ENCODE measurements at regions of chr18 and their contacts with region 1.

Region 1: DNA sequence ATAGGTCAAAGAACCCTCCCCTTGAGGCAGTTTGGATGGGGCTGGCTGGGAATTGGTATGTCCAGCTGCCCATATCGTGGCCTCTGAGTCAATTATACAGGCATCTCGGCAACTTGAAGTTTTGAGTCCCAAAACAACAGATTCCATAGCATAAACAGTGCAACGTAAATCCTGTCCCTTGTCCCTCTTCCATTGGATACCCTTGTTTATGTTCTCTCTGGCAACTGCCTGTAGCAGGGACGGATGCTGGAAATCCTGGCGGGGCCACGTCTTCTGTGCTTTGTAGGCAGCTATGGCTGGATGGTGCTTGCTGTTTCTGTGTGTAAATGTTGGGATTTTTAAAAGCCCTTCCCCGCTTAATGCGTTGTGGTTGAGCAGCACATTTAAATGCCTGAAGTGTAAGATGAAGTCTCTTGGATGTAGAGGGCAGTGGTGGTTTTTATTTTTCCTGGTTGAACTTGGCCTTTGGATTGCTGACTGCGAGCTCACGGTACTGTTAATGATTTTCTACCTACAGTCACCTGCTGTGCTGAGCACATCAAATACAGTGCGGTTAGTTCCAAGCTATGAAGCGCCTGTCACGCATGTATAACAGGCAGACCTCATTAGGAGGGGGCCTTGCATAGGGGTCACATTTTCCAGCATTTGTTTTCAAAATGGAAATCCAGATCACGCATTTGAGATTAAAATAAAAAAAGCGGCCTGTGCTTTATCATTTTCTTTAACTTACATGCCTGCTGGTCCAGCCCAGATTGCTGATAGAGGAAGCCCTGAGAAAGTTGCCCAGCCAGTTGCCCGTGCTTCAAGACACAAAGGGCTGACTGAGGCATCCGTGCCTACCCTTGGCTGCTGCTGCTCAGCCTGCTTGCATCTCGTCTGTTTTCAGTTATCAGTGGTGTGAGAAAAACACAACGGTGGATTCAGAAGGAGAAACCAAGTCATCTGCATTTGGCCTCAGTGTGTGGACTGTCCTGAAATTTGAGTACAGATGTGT is 84.7 kb downstream of the NEDD4L start:
- DNase-seq: no peak
- H3K4me3 ChIP-seq: no peak overlapping the region
- H3K27ac ChIP-seq: no peak overlapping the region
- H3K4me1 ChIP-seq: no peaks in the 10 kb centered on the region
- H3K27me3 ChIP-seq: no peaks in the 10 kb centered on the region
- CTCF ChIP-seq: no peak

Region 2: GRCh38 chr18:57881818-57882413 is 246.8 kb before region 1 on chr18:
- intact Hi-C with region 1: loop called (anchors 10 kb)
- DNase-seq: peak; percentile 37
- H3K4me3 ChIP-seq: no peak overlapping the region
- H3K27ac ChIP-seq: no peak overlapping the region
- H3K4me1 ChIP-seq: no peaks in the 10 kb centered on the region
- H3K27me3 ChIP-seq: no peaks in the 10 kb centered on the region
- CTCF ChIP-seq: peak; percentile 94

Region 3: DNA sequence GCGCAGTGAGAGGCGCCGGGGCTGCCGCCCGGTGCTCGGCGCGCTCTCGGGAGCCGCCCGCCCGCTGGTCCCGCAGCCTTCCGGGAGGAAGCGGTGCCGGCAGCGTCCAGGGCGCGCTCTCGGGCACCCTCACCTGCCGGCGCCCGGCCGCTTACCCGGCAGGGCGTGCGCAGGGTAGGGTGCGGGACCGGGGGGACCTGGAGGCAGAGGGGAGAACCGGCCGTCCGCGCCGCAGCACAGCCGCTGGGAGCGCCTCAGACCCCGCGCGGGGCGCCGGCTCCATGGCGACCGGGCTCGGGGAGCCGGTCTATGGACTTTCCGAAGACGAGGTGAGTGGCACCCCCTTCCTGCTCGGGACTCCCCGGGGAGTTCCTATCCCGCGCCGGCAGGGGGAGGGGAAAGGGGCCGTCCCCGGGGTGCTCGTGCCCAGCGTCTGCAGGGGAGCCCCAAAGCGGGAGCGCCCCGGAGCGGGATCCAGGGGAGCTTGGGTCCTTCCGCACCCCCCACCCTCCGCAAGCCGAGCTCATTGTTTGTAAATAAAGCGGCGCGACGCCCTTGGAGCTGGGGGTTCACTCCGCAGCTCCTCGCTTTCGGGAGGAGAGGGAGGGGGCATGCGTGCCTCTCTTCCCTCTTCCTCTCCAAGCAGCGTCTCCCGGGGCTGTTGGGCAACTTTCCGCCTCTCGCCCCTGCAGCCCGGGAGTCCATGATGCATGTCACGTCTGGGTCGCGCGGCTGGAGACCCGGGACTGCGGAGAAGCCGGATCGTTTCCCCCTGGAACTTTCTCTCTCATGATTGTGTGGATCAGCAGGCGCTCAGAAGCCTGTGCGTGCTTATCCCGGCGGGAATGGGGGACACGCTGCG is 84.1 kb before region 1 on chr18:
- intact Hi-C with region 1: loop called (anchors 5 kb)
- DNase-seq: peak; percentile 22
- H3K4me3 ChIP-seq: peak overlapping the region; percentile 91
- H3K27ac ChIP-seq: peak overlapping the region; percentile 84
- H3K4me1 ChIP-seq: peaks cover 25% of the 10 kb centered on the region
- H3K27me3 ChIP-seq: no peaks in the 10 kb centered on the region
- CTCF ChIP-seq: peak; percentile 18

Measured in left ventricle myocardium inferior (tissue), 1 donor.